A549 (cell line): ENCODE measurements at regions of chr2 and their contacts with region 1.

Region 1: GRCh38 chr2:231227309-231228162 is 29.1 kb downstream of the ARMC9 start:
- DNase-seq: peak; percentile 83 to 92
- ATAC-seq: peak; percentile 99
- H3K4me3 ChIP-seq: no peak overlapping the region
- H3K27ac ChIP-seq: peak overlapping the region in 1 of 2 experiments; percentile 53; a peak in 1 of 6 replicates
- H3K4me1 ChIP-seq: peaks cover 5% of the 10 kb centered on the region; the same call in 1 of the 3 replicates
- CTCF ChIP-seq: peak; percentile 87
- EP300 ChIP-seq: no peak
- POLR2A ChIP-seq: no peak
- RAD21 ChIP-seq: peak; percentile 88 to 94

Region 2: GRCh38 chr2:231007286-231008007 is 220.1 kb before region 1 on chr2:
- CTCF ChIA-PET with region 1: no interaction called
- POLR2A ChIA-PET with region 1: no interaction called
- DNase-seq: no peak
- ATAC-seq: no peak; a peak in 1 of 6 replicates
- H3K4me3 ChIP-seq: no peak overlapping the region
- H3K27ac ChIP-seq: no peak overlapping the region
- H3K4me1 ChIP-seq: no peaks in the 10 kb centered on the region
- CTCF ChIP-seq: no peak
- EP300 ChIP-seq: no peak
- POLR2A ChIP-seq: no peak
- RAD21 ChIP-seq: no peak

Region 3: GRCh38 chr2:231200805-231201474 is 26.6 kb before region 1 on chr2:
- CTCF ChIA-PET with region 1: interaction called, 17 read pairs
- POLR2A ChIA-PET with region 1: no interaction called
- DNase-seq: no peak
- ATAC-seq: no peak
- H3K4me3 ChIP-seq: no peak overlapping the region
- H3K27ac ChIP-seq: no peak overlapping the region
- H3K4me1 ChIP-seq: peaks cover 14% of the 10 kb centered on the region
- CTCF ChIP-seq: no peak
- EP300 ChIP-seq: no peak
- POLR2A ChIP-seq: no peak
- RAD21 ChIP-seq: no peak

Region 4: DNA sequence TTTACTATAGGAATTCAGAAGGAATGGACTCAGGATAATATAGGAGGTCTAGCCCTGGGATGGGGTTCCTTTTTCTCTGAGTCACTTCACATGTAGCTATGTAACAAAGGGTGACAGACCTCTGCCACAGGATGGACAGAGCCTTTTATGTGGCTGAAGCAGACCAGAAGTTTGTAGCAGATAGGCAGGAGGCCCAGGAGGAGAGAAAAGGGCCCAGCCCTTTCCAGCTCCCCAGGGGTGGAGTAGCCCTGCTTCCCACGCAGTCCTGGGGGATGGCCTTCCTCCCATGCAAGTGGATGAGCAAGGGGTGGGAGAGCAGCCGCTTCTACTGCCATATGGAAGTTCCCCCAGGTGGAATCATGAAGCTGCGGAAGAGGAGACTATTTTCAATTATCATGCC is 11.2 kb after region 1 on chr2:
- CTCF ChIA-PET with region 1: interaction called, 26 read pairs
- POLR2A ChIA-PET with region 1: no interaction called
- DNase-seq: no peak
- ATAC-seq: no peak
- H3K4me3 ChIP-seq: no peak overlapping the region
- H3K27ac ChIP-seq: no peak overlapping the region
- H3K4me1 ChIP-seq: no peaks in the 10 kb centered on the region
- CTCF ChIP-seq: no peak
- EP300 ChIP-seq: no peak
- POLR2A ChIP-seq: no peak
- RAD21 ChIP-seq: no peak

Region 5: GRCh38 chr2:231394211-231395141 is 166.9 kb after region 1 on chr2:
- CTCF ChIA-PET with region 1: interaction called, 333 read pairs
- POLR2A ChIA-PET with region 1: no interaction called
- DNase-seq: peak in 1 of 2 experiments; percentile 34
- ATAC-seq: peak in 1 of 2 experiments; percentile 42; a peak in 3 of 6 replicates
- H3K4me3 ChIP-seq: peak overlapping the region; percentile 73; the same call in 2 of the 3 replicates
- H3K27ac ChIP-seq: peak overlapping the region; percentile 83 to 86; a peak in 4 of 6 replicates
- H3K4me1 ChIP-seq: peaks cover 6% of the 10 kb centered on the region
- CTCF ChIP-seq: 0 out of 3 replicates have a peak, but pooled peaks have one; percentile 21
- EP300 ChIP-seq: no peak
- POLR2A ChIP-seq: no peak
- RAD21 ChIP-seq: no peak

Region 6: GRCh38 chr2:231452799-231453508 is 225.4 kb after region 1 on chr2:
- CTCF ChIA-PET with region 1: interaction called, 16 read pairs
- POLR2A ChIA-PET with region 1: no interaction called
- DNase-seq: peak in 1 of 2 experiments; percentile 23
- ATAC-seq: peak; percentile 13 to 38
- H3K4me3 ChIP-seq: no peak overlapping the region
- H3K27ac ChIP-seq: no peak overlapping the region
- H3K4me1 ChIP-seq: no peaks in the 10 kb centered on the region
- CTCF ChIP-seq: no peak
- EP300 ChIP-seq: no peak
- POLR2A ChIP-seq: no peak
- RAD21 ChIP-seq: no peak